ENCODE measurements at regions of chr9 and their contacts with region 1.

Region 1: DNA sequence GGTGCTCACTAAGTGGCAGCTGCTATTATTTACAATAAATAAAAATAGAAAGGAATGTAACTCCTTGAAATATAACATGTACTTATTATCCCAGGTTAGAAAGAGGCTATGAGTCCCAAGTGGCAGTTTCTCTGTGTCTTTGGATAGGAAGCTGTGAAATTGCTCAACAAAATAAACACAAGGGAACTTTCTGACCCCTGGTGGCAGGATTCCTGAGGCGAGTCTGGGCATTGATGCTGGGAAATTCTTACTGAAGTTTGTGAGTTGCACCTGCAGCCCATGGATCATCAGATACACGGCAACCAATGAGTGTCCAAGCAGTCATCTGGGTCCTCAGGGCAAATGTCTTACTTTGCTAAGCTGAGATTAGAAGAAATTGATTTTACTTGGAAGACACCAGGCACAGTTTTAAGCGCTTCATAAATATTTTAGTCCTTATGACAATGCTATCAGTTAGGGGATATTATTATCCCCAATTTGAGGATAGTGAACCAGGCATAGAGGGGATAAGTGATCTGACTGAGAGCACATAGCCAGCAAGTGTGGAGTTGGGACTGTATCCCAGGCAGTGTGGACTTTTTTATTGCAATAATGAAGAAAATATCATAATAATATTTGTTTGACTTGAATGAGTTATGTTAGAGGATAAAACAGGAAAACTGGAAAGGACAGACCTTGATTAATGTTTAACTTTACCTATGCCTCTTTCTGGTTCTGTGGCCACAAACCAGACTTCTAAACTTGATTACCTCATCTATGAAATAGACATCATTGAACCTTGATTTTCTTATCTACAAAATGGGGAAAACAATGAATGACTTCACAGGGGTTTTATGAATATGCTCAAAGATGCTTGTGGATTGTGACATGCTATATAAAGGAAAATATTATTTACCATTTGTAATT is 265.5 kb upstream of the ADAMTSL1 start:
- DNase-seq: no peak

Region 2: DNA sequence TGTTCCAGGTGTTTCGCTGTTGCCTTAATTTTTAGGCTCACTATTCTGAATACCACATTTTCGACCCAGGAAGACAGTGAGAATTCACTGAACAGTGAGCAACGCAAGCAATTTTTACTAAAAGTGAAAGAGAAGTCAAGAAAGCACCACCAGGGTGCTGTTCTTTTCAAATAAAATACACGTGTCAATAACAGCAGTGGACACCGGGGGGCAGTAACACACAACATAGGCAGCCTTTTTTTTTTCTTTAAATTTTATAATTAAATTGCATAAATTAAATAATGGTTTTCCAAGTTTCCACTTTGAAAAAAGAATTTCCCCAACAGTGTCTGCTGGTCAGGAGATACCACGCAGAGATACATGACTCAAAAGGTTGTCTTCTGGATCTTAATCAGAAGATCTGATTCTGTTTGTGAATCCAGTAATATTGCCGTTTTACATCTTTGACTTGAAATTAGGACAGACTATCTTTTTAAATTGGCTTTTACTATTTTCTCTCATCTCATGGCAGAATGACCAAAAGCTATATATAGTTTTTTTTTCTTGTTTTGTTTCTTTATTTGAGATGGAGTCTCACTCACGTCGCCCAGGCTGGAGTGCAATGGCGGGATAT is 676.7 kb before region 1 on chr9:
- intact Hi-C with region 1: loop called (anchors 5 kb)
- DNase-seq: no peak

Region 3: GRCh38 chr9:17810728-17811571 is 397.5 kb before region 1 on chr9:
- intact Hi-C with region 1: loop called (anchors 2 kb)
- DNase-seq: no peak

Region 4: GRCh38 chr9:18143028-18143745 is 65.2 kb before region 1 on chr9:
- intact Hi-C with region 1: loop called (anchors 10 kb)
- DNase-seq: no peak

Measured in cardiac septum (tissue), 1 donor.